ENCODE measurements at regions of chr16 and their contacts with region 1.

Region 1: DNA sequence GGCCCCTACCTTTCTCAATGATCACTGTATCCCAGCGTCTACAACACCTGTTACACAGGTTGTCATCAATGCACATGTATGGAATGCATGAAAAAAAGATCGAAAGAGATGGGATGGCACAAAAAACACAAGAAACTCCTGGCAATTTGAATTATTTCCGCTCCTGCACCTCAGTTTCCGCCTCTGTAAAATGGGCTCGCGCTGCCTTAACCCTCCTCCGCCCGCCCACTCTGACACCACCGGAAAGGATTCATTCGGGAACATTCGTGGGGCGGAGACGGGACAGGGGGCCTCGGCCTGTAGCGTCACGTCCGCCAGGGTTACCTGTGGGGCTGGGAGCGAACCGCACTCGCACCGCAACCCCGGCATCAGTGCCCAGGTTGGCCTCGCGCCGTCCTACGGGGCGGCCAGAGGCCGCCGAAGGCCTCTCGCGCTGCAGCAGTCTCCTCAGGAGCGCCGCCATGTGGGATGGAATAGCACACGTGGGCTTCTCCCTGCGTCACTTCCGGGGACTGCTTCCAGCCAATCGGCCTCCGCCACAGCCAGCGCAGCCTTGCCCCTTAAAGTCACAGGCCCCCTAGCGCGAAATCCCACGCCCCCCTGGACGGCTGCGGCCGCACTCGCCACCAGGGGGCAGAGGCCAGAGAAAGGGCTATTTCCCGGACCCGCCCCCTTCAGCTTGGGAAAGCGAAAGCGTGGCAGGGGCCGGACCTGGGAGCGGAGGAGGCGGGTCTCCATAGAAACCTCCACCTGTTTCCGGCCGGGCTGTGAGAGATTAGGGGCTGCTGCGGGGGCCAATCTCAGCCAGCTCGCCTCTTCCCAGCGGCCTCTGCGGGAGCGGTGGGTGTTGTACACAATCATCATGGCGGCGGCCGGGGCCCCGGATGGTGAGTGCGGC is at the starts of genes EARS2 and UBFD1:
- DNase-seq: peak; percentile 98 to 99 (median 99)
- ATAC-seq: peak; percentile 92 to 97 (median 94)
- H3K4me3 ChIP-seq: peak within 1 kb of the TSS; percentile 66 to 97 (median 84)
- H3K27ac ChIP-seq: peak within 1 kb of the TSS; percentile 46 to 89 (median 74)
- H3K4me1 ChIP-seq: peaks cover 0 to 7% (median 0%) of the 10 kb centered on the region in 3 donors
- H3K27me3 ChIP-seq: no peaks in the 10 kb centered on the region
- CTCF ChIP-seq: peak; percentile 92 to 97 (median 95)
- total RNA-seq, gene EARS2: 8.2 to 11.2 (median 10.9) TPM
- total RNA-seq, gene UBFD1: 15.6 to 38.2 (median 20.4) TPM

Region 2: DNA sequence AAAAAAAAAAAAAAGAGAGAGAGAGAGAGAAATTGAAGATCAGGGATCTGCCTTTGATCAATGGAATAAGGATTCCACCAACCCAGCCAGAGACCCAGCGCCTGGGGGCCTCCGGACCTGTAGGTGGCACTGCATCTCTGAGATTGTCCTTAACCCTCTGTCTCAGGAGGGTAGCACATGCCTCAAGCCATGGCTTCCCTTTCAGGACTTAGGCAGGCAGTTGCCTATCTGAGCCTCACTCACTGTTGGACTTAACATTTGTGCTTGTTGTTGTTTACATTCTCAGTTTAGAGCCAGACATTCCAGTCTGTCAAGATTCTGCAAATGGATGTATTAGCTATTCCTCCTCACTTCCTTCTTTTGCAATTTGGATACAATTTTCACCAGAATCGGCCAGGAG is 260.1 kb before region 1 on chr16:
- intact Hi-C with region 1: no loop called
- DNase-seq: peak in 1 of 6 donors; percentile 18
- ATAC-seq: peak in 3 of 4 donors; percentile 27 to 66 (median 62)
- H3K4me3 ChIP-seq: no peak overlapping the region
- H3K27ac ChIP-seq: no peak overlapping the region
- H3K4me1 ChIP-seq: no peaks in the 10 kb centered on the region
- H3K27me3 ChIP-seq: peaks cover 0 to 3% (median 1%) of the 10 kb centered on the region in 4 donors
- CTCF ChIP-seq: no peak

Region 3: GRCh38 chr16:23466066-23466885 is 90.9 kb before region 1 on chr16:
- intact Hi-C with region 1: loop called in 1 of 3 experiments (anchors 10 kb)
- DNase-seq: no peak
- ATAC-seq: no peak
- H3K4me3 ChIP-seq: no peak overlapping the region
- H3K27ac ChIP-seq: no peak overlapping the region
- H3K4me1 ChIP-seq: peaks cover 5 to 14% (median 7%) of the 10 kb centered on the region in 3 donors
- H3K27me3 ChIP-seq: no peaks in the 10 kb centered on the region
- CTCF ChIP-seq: no peak

Region 4: DNA sequence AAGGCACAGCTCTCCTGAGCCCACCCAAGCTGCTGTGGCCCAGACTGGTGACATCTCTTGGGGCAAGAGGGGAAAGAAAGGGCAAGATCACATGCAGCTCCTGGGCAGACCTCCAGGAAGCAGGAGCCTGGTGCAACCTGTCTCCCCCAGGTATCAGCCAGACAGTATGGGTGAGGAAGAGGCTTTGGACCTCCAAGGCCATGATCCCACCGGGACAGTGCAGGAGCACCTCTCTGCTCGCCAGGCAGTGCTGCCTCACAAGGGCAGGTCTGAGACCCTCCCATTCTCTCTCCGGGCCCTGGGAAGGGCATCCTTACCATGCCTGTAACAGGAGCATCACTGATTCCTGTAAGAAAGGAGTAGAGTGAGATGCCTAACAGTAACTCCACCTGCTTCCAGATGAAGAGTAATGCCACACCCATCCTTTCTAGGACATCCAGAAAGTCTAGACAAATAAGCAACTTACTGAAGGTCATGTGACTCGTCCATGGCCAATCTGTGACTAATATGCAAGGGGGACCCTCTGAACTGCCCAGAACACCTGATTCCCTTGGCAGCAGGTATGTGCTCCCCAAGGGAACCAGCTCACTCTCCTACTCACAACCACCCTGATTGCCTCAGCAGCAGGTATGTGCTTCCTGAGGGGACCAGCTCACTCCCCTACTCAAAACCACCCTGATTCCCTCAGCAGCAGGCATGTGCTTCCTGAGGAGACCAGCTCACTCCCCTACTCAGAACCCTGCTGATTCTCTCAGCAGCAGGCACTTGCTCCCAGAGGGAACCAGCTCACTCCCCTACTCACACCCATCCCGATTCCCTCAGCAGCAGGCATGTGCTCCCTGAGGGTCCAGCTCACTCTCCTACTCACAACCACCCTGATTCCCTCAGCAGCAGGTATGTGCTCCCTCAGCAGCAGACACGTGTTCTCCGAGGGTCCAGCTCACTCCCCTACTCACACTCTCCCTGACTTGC is 78.3 kb before region 1 on chr16:
- intact Hi-C with region 1: no loop called
- DNase-seq: peak in 1 of 6 donors; percentile 38
- ATAC-seq: peak in 1 of 4 donors; percentile 31
- H3K4me3 ChIP-seq: no peak overlapping the region
- H3K27ac ChIP-seq: no peak overlapping the region
- H3K4me1 ChIP-seq: no peaks in the 10 kb centered on the region
- H3K27me3 ChIP-seq: no peaks in the 10 kb centered on the region
- CTCF ChIP-seq: no peak

Region 5: GRCh38 chr16:23835390-23836077 is 278.4 kb after region 1 on chr16 and contains the start of gene PRKCB:
- intact Hi-C with region 1: no loop called
- DNase-seq: peak in 5 of 6 donors; percentile 13 to 71 (median 49)
- ATAC-seq: peak in 3 of 4 donors; percentile 68 to 95 (median 89)
- H3K4me3 ChIP-seq: peak within 1 kb of the TSS in 1 of 4 donors; percentile 41
- H3K27ac ChIP-seq: no peak within 1 kb of the TSS
- H3K4me1 ChIP-seq: no peaks in the 10 kb centered on the region
- H3K27me3 ChIP-seq: peaks cover 0 to 4% (median 0%) of the 10 kb centered on the region in 4 donors
- CTCF ChIP-seq: no peak
- total RNA-seq, gene PRKCB: 0.19 to 4.3 (median 1.0) TPM